Prostate gland (tissue), 2 donors: ENCODE measurements at regions of chr2 and their contacts with region 1.

Region 1: DNA sequence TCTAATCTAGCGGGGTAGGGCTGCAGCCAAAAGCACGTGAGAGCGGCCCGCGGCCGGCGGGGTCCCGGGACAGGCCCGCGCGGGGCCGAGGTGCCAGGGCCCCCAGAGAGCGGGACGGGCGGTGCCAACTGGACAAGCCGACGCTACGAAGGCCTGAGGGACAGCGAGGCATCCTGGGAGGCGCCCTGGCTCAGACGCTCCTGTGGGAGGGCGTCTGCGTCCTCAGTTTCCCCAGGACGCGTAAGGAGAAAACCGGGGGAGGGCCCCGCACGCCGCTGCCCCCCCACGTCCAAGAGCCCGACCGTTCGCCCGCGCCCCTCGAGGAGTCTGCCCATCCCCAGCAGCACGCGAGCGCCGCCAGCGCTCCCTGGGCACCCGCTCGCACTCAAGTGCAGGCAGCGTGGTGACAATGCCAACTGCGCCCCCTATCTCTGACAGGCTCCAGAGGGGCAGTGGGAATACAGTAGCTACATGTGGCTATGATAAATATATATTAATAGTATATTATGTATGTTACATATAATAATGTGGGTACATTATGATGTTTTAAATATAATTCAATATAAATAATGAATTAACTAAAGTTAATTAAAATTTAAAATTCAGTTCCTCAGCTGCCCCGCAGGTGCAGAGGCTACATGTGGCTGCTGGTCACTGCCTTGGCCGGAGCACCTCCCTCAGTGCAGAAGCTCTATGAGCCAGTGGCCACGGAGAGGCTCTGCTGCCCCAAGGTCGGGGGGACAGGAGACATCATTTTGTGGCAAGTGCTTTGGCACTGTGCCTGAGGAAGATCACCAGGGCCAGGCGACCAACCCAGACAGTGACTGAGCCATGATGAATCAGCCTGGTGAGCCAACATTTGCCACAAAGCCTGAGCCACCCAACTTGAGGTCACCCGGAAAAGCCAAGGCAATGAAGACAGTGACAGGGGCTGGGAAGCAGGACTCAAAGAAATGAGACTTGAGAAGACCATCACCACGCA is 5.5 kb upstream of the SFT2D3 start:
- DNase-seq: peak; percentile 37
- H3K4me3 ChIP-seq: peak overlapping the region; percentile 16 to 20
- H3K27ac ChIP-seq: no peak overlapping the region
- H3K4me1 ChIP-seq: no peaks in the 10 kb centered on the region
- H3K27me3 ChIP-seq: peaks cover 1% of the 10 kb centered on the region
- CTCF ChIP-seq: peak; percentile 15 to 49 (median 38)
- POLR2A ChIP-seq: no peak

Region 2: GRCh38 chr2:127508631-127509034 is 187.1 kb before region 1 on chr2:
- intact Hi-C with region 1: loop called (anchors 5 kb)
- DNase-seq: peak; percentile 47
- H3K4me3 ChIP-seq: no peak overlapping the region
- H3K27ac ChIP-seq: peak overlapping the region in 1 of 2 donors; percentile 25
- H3K4me1 ChIP-seq: no peaks in the 10 kb centered on the region
- H3K27me3 ChIP-seq: no peaks in the 10 kb centered on the region
- CTCF ChIP-seq: no peak
- POLR2A ChIP-seq: no peak

Region 3: DNA sequence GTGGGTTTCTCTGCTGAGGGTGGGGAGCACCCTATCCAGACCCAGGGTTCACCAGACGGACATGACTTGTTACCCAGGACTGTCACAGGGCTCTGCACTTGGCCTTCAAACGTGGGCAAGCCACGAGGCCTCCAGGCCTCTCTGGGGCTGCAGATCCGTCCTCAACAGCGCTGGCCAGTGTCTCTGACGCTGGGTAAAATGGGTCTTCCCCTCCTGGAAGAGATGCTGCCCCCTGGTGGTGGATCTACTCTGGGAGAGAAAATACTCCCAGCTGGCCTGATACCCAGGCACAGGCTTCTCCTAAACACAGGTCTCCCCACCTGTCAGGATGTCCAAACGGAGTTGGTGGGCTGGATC is 46.1 kb before region 1 on chr2:
- intact Hi-C with region 1: loop called (anchors 2 kb)
- DNase-seq: peak; percentile 82
- H3K4me3 ChIP-seq: no peak overlapping the region
- H3K27ac ChIP-seq: no peak overlapping the region
- H3K4me1 ChIP-seq: peaks cover 2% of the 10 kb centered on the region
- H3K27me3 ChIP-seq: no peaks in the 10 kb centered on the region
- CTCF ChIP-seq: peak; percentile 72 to 93 (median 81)
- POLR2A ChIP-seq: no peak

Region 4: DNA sequence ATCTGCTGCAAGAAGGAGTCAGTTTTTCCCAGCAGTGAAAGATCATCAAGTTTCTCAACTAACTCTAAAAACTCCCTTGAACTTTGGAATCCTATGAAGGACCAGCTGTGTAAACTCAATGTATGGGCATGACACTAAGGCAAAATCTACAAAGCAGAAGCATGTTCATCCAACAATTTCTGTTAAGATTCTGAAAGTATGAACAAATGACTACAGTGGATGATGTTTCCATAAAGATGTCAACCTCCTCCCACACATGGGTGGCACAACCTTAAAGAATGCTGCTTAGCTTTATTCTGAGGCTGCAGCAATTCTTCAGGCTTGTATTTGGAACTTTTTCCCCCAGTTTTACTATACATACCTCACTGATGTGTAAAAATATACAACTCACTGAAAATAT is 68.0 kb after region 1 on chr2:
- intact Hi-C with region 1: no loop called
- DNase-seq: no peak
- H3K4me3 ChIP-seq: no peak overlapping the region
- H3K27ac ChIP-seq: no peak overlapping the region
- H3K4me1 ChIP-seq: no peaks in the 10 kb centered on the region
- H3K27me3 ChIP-seq: no peaks in the 10 kb centered on the region
- CTCF ChIP-seq: no peak
- POLR2A ChIP-seq: no peak